Stomach (tissue), 19 donors: ENCODE measurements at regions of chr18 and their contacts with region 1.

Region 1: DNA sequence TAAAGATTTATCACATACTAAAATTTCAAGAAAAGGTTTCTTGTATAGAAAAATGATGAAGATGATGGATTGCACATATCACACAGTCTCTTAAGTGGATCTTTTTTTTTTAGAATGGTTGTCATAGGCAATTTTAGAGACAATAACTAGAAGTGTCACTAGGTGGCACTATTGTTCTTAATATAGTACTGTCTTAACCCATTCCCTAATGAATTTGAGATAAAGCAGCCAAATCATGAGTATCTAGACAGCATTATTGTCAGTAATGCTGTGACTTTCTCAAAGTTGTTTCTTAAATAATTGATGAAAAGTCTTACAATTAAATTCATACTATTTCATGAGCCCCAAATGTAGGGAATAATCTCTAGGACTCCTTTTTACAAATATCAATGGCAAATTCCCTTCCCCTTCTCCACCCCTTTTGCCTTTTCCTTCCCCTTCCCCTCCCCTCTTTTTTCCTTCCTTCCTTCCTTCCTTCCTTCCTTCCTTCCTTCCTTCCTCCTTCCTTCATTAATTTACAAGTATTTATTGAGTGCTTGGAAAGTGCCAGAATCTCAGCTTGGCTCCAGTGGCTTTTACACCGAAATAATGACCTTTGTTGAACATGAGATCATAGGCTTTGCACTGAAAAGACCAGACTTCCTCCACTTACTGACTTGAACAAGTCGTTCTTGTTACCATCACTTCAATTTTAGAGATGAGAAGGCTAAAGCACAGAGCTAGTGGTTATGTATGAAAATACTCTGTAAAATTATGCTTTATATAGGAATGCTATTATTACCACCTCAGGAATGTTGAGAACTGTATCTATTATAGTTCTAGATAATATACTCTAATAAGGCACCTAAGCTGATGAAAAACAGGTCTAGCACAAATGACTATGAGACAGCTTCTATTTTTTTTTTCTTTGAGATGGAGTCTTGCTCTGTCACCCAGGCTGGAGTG is 19.8 kb downstream of the MYL12B start:
- DNase-seq: peak in 1 of 2 donors; percentile 89
- H3K4me3 ChIP-seq: no peak overlapping the region
- H3K27ac ChIP-seq: peak overlapping the region in 2 of 5 donors; percentile 37 to 41
- H3K4me1 ChIP-seq: peaks cover 0 to 27% (median 4%) of the 10 kb centered on the region in 4 donors
- H3K27me3 ChIP-seq: no peaks in the 10 kb centered on the region
- CTCF ChIP-seq: peak in 5 of 7 experiments; percentile 24 to 70 (median 67)
- EP300 ChIP-seq: no peak
- POLR2A ChIP-seq: no peak

Region 2: DNA sequence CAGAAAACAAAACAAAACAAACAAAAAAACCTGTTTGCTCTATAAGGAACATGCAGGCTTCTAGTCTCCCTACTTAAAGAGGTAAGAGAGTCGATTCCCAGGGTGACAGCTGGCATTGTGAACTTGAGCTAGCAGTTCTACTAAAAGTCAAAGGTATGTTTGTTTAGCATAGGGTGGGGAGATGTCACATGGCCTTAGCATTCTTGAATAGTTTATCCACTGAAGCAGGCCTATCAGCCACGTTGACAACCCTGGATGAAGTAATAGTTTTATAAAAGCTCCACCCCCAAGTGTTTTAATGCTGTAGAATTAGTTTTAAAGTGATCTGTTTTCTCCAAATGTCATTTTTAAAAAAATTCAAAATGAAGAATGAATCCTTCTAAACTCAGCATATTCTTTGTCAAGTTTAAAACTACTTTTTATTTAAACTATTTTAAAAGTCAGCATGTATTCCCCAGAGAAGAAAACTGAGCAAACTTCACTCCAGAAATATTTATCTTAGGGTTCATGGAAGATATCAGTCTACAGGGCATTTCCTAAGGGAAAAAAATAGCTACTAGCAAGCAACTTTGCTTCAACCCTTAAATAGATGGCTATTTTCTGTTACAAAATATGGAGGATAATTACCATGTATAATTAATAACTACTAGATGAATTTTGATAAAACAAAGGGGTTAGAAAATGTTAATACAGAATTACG is 63.6 kb before region 1 on chr18:
- intact Hi-C with region 1: no loop called
- DNase-seq: peak; percentile 41 to 93
- H3K4me3 ChIP-seq: peak overlapping the region in 1 of 4 donors; percentile 24
- H3K27ac ChIP-seq: peak overlapping the region in 4 of 5 donors; percentile 38 to 78 (median 74)
- H3K4me1 ChIP-seq: peaks cover 0 to 47% (median 25%) of the 10 kb centered on the region in 4 donors
- H3K27me3 ChIP-seq: no peaks in the 10 kb centered on the region
- CTCF ChIP-seq: no peak
- EP300 ChIP-seq: no peak
- POLR2A ChIP-seq: no peak

Region 3: GRCh38 chr18:3350566-3351527 is 69.1 kb after region 1 on chr18:
- intact Hi-C with region 1: no loop called
- DNase-seq: no peak
- H3K4me3 ChIP-seq: no peak overlapping the region
- H3K27ac ChIP-seq: no peak overlapping the region
- H3K4me1 ChIP-seq: no peaks in the 10 kb centered on the region
- H3K27me3 ChIP-seq: no peaks in the 10 kb centered on the region
- CTCF ChIP-seq: no peak
- EP300 ChIP-seq: no peak
- POLR2A ChIP-seq: no peak

Region 4: DNA sequence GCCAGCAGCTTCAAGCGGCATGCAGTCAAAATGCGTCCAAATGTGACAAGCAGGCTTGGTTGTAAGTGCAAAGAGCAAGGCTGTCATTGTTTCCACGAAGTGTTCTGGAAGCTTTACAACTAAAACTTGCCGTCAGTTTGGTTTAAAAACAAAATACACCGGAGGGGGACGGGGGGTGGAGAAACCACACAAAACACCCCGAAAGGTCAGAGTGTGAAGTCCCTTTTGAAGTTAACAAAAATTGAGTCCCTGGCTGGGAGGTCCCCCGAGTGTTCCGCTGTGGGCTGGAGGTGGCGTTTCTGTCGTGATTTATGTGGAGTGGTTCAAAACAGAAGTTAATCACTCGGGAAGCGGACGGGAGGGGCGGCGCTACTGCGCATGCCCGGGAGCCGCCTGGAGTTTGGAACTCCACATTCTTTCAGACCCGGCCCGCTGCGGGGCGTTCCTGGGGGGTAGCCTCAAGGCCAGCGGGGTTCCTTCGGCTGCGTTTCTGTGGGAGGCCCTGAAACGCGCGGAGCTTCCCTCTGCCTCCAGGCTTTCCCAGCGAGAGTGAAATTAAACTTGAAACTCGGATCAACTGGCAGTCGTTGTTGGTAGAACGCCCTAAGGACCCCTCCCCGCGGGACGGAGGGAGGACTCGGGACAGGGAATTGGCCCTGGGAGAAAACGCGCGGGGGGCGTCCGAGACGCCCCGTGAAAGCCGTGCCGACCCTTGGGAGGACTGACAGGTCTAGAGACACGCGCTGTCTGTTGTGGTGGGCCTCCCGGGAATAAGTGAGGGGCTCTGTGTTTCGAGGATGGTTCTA is 169.7 kb after region 1 on chr18:
- intact Hi-C with region 1: loop called (anchors 10 kb)
- DNase-seq: peak; percentile 94 to 97
- H3K4me3 ChIP-seq: peak overlapping the region; percentile 69 to 86 (median 78)
- H3K27ac ChIP-seq: peak overlapping the region; percentile 94 to 99 (median 99)
- H3K4me1 ChIP-seq: peaks cover 31 to 53% (median 40%) of the 10 kb centered on the region in 4 donors
- H3K27me3 ChIP-seq: no peaks in the 10 kb centered on the region
- CTCF ChIP-seq: no peak
- EP300 ChIP-seq: no peak
- POLR2A ChIP-seq: peak in 2 of 4 donors; percentile 81 to 86

Region 5: GRCh38 chr18:3466045-3466444 is 184.3 kb after region 1 on chr18:
- intact Hi-C with region 1: no loop called
- DNase-seq: no peak
- H3K4me3 ChIP-seq: no peak overlapping the region
- H3K27ac ChIP-seq: peak overlapping the region in 1 of 5 donors; percentile 24
- H3K4me1 ChIP-seq: peaks cover 0 to 12% (median 2%) of the 10 kb centered on the region in 4 donors
- H3K27me3 ChIP-seq: no peaks in the 10 kb centered on the region
- CTCF ChIP-seq: no peak
- EP300 ChIP-seq: no peak
- POLR2A ChIP-seq: no peak

Region 6: GRCh38 chr18:3585656-3586509 is 304.2 kb after region 1 on chr18:
- intact Hi-C with region 1: loop called (anchors 10 kb)
- DNase-seq: peak; percentile 88 to 92
- H3K4me3 ChIP-seq: no peak overlapping the region
- H3K27ac ChIP-seq: peak overlapping the region in 1 of 5 donors; percentile 17
- H3K4me1 ChIP-seq: peaks cover 0 to 11% (median 6%) of the 10 kb centered on the region in 4 donors
- H3K27me3 ChIP-seq: no peaks in the 10 kb centered on the region
- CTCF ChIP-seq: peak in 5 of 7 experiments; percentile 61 to 86 (median 76)
- EP300 ChIP-seq: no peak
- POLR2A ChIP-seq: no peak

Region 7: DNA sequence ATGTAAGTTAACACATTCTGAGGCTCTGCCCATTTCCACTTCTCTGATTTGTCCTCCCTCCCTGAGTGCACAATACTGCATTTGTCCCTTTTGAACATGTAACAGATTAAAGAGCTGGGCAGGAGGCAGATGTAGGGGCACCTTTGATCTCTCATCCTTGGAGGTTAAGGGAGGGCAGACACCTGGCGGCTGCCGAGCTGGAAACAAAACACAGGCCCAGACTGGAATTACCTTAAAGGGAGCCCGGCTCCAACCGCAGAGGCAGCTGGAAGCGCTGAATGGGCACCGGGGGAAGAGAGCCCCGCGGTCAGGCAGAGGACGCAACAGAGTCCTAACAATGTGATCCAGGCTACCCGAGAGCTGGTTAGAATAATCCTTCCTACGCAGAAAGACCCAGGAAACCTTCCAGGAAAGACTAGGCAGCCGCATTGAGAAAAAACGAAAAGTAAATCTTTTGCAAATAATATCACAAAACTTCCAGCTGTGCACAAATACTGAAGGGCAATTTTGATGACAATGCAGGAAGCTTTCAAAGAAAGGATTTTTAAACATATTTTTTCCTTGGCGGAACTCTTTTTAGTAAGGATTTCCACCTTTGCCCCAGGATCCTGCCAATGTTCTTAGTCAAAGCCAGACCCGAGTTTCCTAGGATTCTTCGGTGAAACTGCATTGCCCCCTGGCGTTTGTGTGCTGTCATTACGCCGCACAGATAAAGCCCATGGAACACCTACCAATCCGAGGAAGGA is 384.2 kb after region 1 on chr18:
- intact Hi-C with region 1: loop called (anchors 5 kb)
- DNase-seq: peak; percentile 86 to 95
- H3K4me3 ChIP-seq: peak overlapping the region; percentile 7 to 22 (median 14)
- H3K27ac ChIP-seq: peak overlapping the region; percentile 71 to 95 (median 83)
- H3K4me1 ChIP-seq: peaks cover 0 to 32% (median 11%) of the 10 kb centered on the region in 4 donors
- H3K27me3 ChIP-seq: no peaks in the 10 kb centered on the region
- CTCF ChIP-seq: peak in 6 of 7 experiments; percentile 53 to 98 (median 96)
- EP300 ChIP-seq: no peak
- POLR2A ChIP-seq: no peak

Region 8: GRCh38 chr18:4004183-4004829 is 722.6 kb after region 1 on chr18:
- intact Hi-C with region 1: loop called (anchors 10 kb)
- DNase-seq: no peak
- H3K4me3 ChIP-seq: no peak overlapping the region
- H3K27ac ChIP-seq: no peak overlapping the region
- H3K4me1 ChIP-seq: peaks cover 0 to 12% (median 0%) of the 10 kb centered on the region in 4 donors
- H3K27me3 ChIP-seq: no peaks in the 10 kb centered on the region
- CTCF ChIP-seq: no peak
- EP300 ChIP-seq: no peak
- POLR2A ChIP-seq: no peak